Transverse colon (tissue), 4 donors: ENCODE measurements at regions of chr20 and their contacts with region 1.

Region 1: DNA sequence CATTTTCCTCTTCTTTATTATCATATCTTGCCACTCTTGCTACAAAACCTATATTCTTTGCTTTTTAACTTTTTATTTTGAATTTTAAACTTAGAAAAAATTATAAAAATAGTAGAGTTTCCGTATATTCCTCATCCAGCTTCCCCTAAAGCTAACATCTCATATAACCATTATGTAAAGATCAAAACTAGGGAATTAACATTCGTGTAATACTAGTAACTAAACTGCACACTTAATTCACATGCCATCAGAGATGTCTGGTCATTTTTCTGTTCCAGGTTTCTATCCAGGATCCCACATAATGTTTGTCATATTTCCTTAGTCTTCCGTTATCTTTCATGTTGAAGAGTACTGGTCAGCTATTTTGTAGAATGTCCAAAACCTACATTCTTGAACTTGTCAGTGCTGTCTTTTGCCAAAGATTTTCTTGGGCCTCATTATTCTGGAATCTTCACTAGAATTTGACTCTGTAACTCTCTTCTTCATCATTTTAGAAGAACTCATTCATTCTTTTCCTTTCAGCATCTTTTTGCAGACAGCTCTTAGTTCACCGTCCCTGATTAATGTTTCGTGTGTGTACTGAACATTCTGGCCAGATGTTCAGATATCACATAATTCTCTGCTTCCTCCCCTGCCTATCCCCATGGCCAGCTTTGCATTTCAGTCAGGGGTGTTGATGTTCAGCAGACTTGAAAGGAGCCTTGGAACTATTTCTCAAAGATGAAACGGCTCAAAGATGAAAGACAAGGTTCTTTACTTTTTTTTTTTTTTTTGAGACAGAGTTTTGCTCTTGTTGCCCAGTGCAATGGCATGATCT is 9.4 kb downstream of the CTNNBL1 start:
- DNase-seq: no peak
- H3K4me3 ChIP-seq: no peak overlapping the region
- H3K27ac ChIP-seq: no peak overlapping the region
- H3K4me1 ChIP-seq: peaks cover 0 to 8% (median 0%) of the 10 kb centered on the region in 4 donors
- H3K27me3 ChIP-seq: no peaks in the 10 kb centered on the region
- CTCF ChIP-seq: no peak
- EP300 ChIP-seq: no peak
- POLR2A ChIP-seq: no peak

Region 2: GRCh38 chr20:37053230-37053950 is 649.8 kb before region 1 on chr20:
- in situ Hi-C with region 1: no loop called
- intact Hi-C with region 1: loop called (anchors 5 kb)
- DNase-seq: no peak
- H3K4me3 ChIP-seq: no peak overlapping the region
- H3K27ac ChIP-seq: no peak overlapping the region
- H3K4me1 ChIP-seq: no peaks in the 10 kb centered on the region
- H3K27me3 ChIP-seq: no peaks in the 10 kb centered on the region
- CTCF ChIP-seq: no peak
- EP300 ChIP-seq: no peak
- POLR2A ChIP-seq: no peak

Region 3: DNA sequence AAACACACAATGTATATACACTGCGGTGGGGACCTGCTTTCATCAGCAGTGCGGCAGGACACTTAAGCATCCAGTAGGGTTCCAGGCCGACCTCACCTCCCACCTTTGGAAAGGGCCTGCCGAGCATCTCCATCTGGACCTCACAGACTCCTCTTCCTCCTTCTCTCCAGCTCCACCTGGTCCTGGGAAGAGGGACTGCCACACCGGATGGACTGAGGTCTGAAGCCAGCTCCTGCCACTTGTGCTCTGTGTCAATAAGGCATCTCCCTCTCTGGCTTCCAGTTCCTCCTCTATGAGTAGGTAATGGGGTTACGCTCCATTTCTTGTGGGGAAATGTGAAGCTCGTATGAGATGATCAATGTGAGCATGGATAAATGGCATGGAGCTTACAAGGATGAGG is 201.3 kb before region 1 on chr20:
- in situ Hi-C with region 1: no loop called
- intact Hi-C with region 1: no loop called
- DNase-seq: no peak
- H3K4me3 ChIP-seq: no peak overlapping the region
- H3K27ac ChIP-seq: no peak overlapping the region
- H3K4me1 ChIP-seq: peaks cover 0 to 1% (median 0%) of the 10 kb centered on the region in 4 donors
- H3K27me3 ChIP-seq: no peaks in the 10 kb centered on the region
- CTCF ChIP-seq: no peak
- EP300 ChIP-seq: no peak
- POLR2A ChIP-seq: no peak

Region 4: DNA sequence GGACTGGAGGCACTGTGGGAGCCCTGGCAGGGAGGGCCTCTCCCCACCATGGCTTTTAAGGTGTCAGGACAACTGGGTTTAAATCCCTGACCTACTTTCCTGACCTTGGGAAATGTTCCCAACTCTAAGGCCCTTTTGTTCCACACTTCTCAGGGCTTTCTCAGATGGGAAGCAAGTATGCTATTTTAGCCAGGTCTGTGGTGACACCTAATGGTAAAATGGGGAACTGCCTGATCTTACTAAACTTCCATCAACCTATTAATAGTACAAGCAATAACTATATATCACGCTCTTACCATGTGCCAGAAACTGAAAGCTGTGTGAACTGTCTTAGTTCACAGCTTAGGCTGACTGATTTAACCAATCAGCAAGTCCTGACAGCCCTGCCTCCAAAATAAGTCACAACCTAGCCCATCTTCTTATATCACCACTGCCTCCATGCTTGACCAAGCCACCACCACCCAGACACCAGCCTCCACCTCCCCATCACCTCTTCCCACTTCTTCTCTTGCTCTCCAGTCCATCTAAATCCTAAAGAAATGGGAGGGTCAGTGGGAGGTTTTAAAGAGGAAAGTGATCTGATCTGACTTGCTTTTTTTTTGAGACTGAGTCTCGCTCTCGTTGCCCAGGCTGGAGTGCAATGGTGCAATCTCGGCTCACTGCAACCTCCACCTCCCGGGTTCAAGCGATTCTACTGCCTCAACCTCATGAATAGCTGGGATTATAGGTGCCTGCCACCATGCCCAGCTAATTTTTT is 168.7 kb before region 1 on chr20:
- in situ Hi-C with region 1: no loop called
- intact Hi-C with region 1: no loop called
- DNase-seq: peak; percentile 44
- H3K4me3 ChIP-seq: no peak overlapping the region
- H3K27ac ChIP-seq: no peak overlapping the region
- H3K4me1 ChIP-seq: peaks cover 3 to 35% (median 10%) of the 10 kb centered on the region in 4 donors
- H3K27me3 ChIP-seq: no peaks in the 10 kb centered on the region
- CTCF ChIP-seq: peak; percentile 82 to 97 (median 87)
- EP300 ChIP-seq: no peak
- POLR2A ChIP-seq: no peak

Region 5: DNA sequence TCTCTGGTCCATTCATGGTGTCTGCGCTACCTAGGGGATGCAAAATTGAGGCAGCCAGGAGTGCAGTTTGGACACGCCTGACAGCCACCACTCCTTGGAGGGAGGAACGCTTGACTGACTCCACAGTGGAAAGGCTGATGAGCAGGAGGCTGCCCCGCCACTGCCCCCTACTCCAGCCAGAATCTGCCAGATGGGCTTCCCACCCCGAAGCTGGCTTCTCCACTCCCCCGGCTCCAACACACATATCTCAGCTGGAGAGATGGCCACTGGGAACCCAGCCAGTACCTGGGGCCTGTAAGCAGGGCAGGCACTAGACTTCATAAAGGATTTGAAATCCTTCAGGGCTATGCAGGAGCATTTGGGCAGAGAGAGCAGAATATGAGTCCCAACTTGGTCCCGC is 124.1 kb before region 1 on chr20:
- in situ Hi-C with region 1: no loop called
- intact Hi-C with region 1: no loop called
- DNase-seq: no peak
- H3K4me3 ChIP-seq: no peak overlapping the region
- H3K27ac ChIP-seq: no peak overlapping the region
- H3K4me1 ChIP-seq: no peaks in the 10 kb centered on the region
- H3K27me3 ChIP-seq: peaks cover 6% of the 10 kb centered on the region
- CTCF ChIP-seq: no peak
- EP300 ChIP-seq: no peak
- POLR2A ChIP-seq: no peak

Region 6: DNA sequence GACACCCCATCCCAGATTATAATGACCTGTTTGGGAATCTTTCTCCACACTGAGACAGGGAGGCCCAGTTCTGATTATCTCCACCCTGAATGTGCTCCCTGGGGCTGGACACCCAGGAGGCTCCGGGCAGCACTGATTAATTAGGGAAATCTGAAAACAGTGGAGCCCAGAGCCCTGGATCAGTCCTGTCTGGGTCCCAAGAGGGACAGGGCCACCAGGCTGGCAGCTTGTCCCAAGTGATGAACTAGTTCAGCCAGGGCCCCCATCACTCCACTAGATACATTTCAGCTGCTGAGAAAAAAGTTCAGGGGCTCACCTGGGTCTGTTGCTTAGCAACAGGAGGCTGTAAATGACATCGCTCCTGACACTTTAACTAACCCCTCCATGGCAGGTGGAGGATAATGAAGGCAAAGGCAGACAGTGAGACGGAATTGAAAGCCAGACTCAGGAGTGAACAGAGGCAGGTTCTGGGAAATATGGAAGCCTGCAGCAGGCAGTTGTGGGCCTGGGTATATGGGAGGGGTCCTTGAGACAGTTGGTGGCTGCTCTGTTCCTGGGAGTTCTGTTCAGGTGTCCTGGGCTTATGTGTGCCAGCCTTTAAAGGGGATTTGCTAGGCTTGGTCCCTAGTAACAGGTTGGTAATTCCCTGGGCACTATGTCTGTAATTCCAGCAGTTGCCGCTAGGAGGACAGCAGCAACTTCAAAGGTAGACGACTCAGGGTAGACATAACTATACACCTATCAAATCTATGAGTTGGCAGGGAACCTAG is 87.7 kb before region 1 on chr20:
- in situ Hi-C with region 1: no loop called
- intact Hi-C with region 1: no loop called
- DNase-seq: peak; percentile 44
- H3K4me3 ChIP-seq: no peak overlapping the region
- H3K27ac ChIP-seq: no peak overlapping the region
- H3K4me1 ChIP-seq: no peaks in the 10 kb centered on the region
- H3K27me3 ChIP-seq: peaks cover 12% of the 10 kb centered on the region
- CTCF ChIP-seq: peak; percentile 52 to 80 (median 62)
- EP300 ChIP-seq: no peak
- POLR2A ChIP-seq: no peak

Region 7: GRCh38 chr20:37816003-37816402 is 112.8 kb after region 1 on chr20:
- in situ Hi-C with region 1: no loop called
- intact Hi-C with region 1: loop called (anchors 5 kb)
- DNase-seq: no peak
- H3K4me3 ChIP-seq: no peak overlapping the region
- H3K27ac ChIP-seq: no peak overlapping the region
- H3K4me1 ChIP-seq: no peaks in the 10 kb centered on the region
- H3K27me3 ChIP-seq: no peaks in the 10 kb centered on the region
- CTCF ChIP-seq: no peak
- EP300 ChIP-seq: no peak
- POLR2A ChIP-seq: no peak